ENCODE measurements at regions of chr3 and their contacts with region 1.

Region 1: GRCh38 chr3:98522244-98523090 is at the start of gene CLDND1:
- DNase-seq: peak; percentile 97
- ATAC-seq: peak; percentile 94
- H3K4me3 Mint-ChIP-seq: peak within 1 kb of the TSS; percentile 95
- H3K27ac Mint-ChIP-seq: peak within 1 kb of the TSS; percentile 95
- H3K4me1 Mint-ChIP-seq: peaks cover 66% of the 10 kb centered on the region
- H3K27me3 Mint-ChIP-seq: no peaks in the 10 kb centered on the region
- total RNA-seq, gene CLDND1: 153 to 171 TPM

Region 2: GRCh38 chr3:97764407-97765238 is 757.8 kb before region 1 on chr3 and contains the start of gene ARL6:
- CTCF ChIA-PET with region 1: no interaction called
- POLR2A ChIA-PET with region 1: no interaction called
- intact Hi-C with region 1: loop called in 1 of 2 experiments (anchors 1 kb)
- DNase-seq: peak; percentile 86
- ATAC-seq: peak; percentile 95
- H3K4me3 Mint-ChIP-seq: peak within 1 kb of the TSS; percentile 97
- H3K27ac Mint-ChIP-seq: peak within 1 kb of the TSS; percentile 97
- H3K4me1 Mint-ChIP-seq: peaks cover 25% of the 10 kb centered on the region
- H3K27me3 Mint-ChIP-seq: no peaks in the 10 kb centered on the region
- total RNA-seq, gene ARL6: 6.9 TPM

Region 3: DNA sequence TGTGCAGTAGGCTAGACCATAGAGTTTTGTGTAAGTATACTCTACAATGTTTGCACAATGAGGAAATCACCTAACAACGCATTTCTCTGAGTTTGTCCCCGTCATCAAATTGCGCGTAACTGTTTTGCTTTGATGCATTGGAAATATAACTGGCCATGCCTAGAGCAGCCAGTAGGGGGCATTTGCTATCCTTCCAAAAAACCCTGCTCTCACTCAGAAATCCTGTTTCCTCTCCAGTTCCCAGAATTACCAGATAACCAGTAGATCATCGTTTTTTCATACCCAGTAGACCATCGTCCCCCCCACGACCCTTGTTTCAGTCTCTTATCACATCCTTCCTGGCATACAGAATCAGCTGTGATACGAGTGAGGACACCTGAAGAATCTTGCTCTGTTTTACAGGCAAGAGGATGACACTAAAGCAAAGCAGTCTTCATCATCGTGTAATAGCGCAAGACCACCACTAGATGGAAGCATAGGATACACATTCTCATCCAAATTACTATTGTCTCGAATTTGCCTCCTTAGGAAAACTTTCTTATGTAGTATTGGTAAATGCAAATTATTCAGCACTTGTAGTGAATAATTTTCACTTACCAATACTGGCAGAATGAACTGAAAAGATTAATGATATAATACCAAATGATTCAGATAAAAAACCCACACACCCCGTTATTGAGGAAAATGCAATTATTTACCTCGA is 483.0 kb before region 1 on chr3:
- CTCF ChIA-PET with region 1: no interaction called
- POLR2A ChIA-PET with region 1: interaction called, 3 read pairs
- intact Hi-C with region 1: loop called (anchors 2 to 10 kb)
- DNase-seq: peak; percentile 84
- ATAC-seq: peak; percentile 88
- H3K4me3 Mint-ChIP-seq: peak overlapping the region; percentile 76
- H3K27ac Mint-ChIP-seq: peak overlapping the region; percentile 97
- H3K4me1 Mint-ChIP-seq: peaks cover 12% of the 10 kb centered on the region
- H3K27me3 Mint-ChIP-seq: peaks cover 4% of the 10 kb centered on the region

Region 4: DNA sequence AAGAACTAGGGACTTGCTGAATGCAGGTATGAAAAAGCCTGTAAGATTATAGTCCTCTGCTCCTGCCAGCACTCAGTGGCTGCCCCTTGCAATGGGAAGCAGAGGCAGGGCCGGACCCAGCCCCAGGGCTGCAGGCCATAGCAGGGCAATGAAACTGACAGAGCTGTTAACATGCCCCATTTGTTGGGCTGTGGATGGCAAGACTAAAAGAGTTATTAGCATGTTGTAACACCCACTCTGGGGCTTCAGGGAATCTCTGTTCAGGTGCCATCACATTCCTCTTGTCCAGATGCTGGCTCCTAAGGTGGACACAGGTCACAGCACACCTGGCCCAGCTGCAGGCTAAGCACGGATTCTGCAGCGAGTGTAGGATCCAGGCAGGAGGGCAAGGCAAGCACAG is 247.6 kb before region 1 on chr3:
- CTCF ChIA-PET with region 1: no interaction called
- POLR2A ChIA-PET with region 1: no interaction called
- intact Hi-C with region 1: no loop called
- DNase-seq: no peak
- ATAC-seq: no peak
- H3K4me3 Mint-ChIP-seq: no peak overlapping the region
- H3K27ac Mint-ChIP-seq: no peak overlapping the region
- H3K4me1 Mint-ChIP-seq: peaks cover 2% of the 10 kb centered on the region
- H3K27me3 Mint-ChIP-seq: peaks cover 9% of the 10 kb centered on the region

Region 5: GRCh38 chr3:98556164-98557130 is 34.0 kb after region 1 on chr3:
- CTCF ChIA-PET with region 1: interaction called, 6 read pairs
- POLR2A ChIA-PET with region 1: interaction called, 16 read pairs
- intact Hi-C with region 1: loop called (anchors 1 kb)
- DNase-seq: peak; percentile 86
- ATAC-seq: peak; percentile 78
- H3K4me3 Mint-ChIP-seq: peak overlapping the region; percentile 67
- H3K27ac Mint-ChIP-seq: peak overlapping the region; percentile 94
- H3K4me1 Mint-ChIP-seq: peaks cover 83% of the 10 kb centered on the region
- H3K27me3 Mint-ChIP-seq: no peaks in the 10 kb centered on the region

Region 6: DNA sequence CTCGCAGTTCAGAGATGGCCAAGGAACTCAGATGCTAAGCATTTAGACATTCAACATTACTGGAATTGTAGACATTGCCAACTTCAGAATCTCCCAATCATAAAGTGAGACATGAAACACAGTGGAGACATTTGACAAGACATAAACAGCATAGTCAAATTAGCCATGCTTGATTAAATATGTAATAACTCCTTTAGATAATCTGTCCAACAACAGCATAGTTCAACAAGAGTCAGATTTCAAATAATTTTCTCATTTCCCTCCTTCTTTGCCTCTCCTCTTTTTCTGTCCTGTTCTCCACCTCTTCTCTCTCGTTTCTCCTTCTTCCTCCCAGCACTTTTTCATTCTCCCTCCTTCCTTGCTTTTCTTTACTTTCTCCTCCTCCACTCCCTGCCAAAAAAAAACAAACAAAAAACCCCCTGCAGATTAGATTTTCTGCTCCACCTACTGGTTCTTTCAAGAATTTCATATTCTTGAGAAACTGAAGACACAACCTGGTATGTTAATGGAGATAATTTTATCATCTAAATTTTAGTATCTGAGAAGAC is 50.8 kb after region 1 on chr3:
- CTCF ChIA-PET with region 1: interaction called, 11 read pairs
- POLR2A ChIA-PET with region 1: no interaction called
- intact Hi-C with region 1: loop called in 1 of 2 experiments (anchors 1 kb)
- DNase-seq: no peak
- ATAC-seq: no peak
- H3K4me3 Mint-ChIP-seq: peak overlapping the region; percentile 11
- H3K27ac Mint-ChIP-seq: peak overlapping the region; percentile 70
- H3K4me1 Mint-ChIP-seq: peaks cover 49% of the 10 kb centered on the region
- H3K27me3 Mint-ChIP-seq: peaks cover 4% of the 10 kb centered on the region

Region 7: DNA sequence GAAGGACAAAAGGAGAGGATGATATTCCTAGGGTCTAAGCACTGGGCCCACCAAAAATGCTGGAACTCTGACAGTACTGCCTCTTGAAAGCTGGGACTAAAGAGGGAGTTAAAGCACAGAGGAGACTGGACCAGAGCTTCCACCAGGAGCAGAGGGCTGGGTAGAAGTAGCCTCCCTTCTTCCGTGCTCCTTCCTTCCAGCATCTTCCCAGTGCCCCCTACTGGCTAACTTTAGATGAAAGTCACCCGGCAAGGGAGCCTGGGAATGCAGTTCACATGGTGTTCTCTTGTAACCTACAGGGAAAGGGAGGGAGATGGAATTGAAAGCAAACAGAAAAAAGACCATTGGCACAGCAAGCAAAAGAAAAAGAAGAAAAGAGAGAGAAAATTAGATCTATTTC is 1009.8 kb after region 1 on chr3:
- CTCF ChIA-PET with region 1: no interaction called
- POLR2A ChIA-PET with region 1: no interaction called
- intact Hi-C with region 1: no loop called
- DNase-seq: peak; percentile 25
- ATAC-seq: no peak
- H3K4me3 Mint-ChIP-seq: no peak overlapping the region
- H3K27ac Mint-ChIP-seq: no peak overlapping the region
- H3K4me1 Mint-ChIP-seq: no peaks in the 10 kb centered on the region
- H3K27me3 Mint-ChIP-seq: peaks cover 2% of the 10 kb centered on the region

Region 8: GRCh38 chr3:99817437-99818240 is 1295.2 kb after region 1 on chr3 and contains the start of gene CMSS1:
- CTCF ChIA-PET with region 1: no interaction called
- POLR2A ChIA-PET with region 1: no interaction called
- intact Hi-C with region 1: loop called (anchors 5 kb)
- DNase-seq: peak; percentile 98
- ATAC-seq: peak; percentile 92
- H3K4me3 Mint-ChIP-seq: peak within 1 kb of the TSS; percentile 85
- H3K27ac Mint-ChIP-seq: peak within 1 kb of the TSS; percentile 97
- H3K4me1 Mint-ChIP-seq: peaks cover 42% of the 10 kb centered on the region
- H3K27me3 Mint-ChIP-seq: no peaks in the 10 kb centered on the region
- total RNA-seq, gene CMSS1: 94.0 to 96.3 TPM